ENCODE measurements at regions of chr11 and their contacts with region 1.

Region 1: GRCh38 chr11:64916775-64917662 is at the start of gene ATG2A:
- DNase-seq: peak; percentile 97 to 99 (median 99)
- H3K4me3 ChIP-seq: peak within 1 kb of the TSS; percentile 63 to 100 (median 93)
- H3K27ac ChIP-seq: peak within 1 kb of the TSS; percentile 49 to 96 (median 86)
- H3K27me3 ChIP-seq: no peaks in the 10 kb centered on the region
- CTCF ChIP-seq: peak in 25 of 56 donors; percentile 7 to 63 (median 26)
- total RNA-seq, gene ATG2A: 21.4 to 47.9 (median 34.8) TPM

Region 2: GRCh38 chr11:64834723-64835620 is 82.0 kb before region 1 on chr11:
- intact Hi-C with region 1: no loop called
- DNase-seq: no peak
- H3K4me3 ChIP-seq: no peak overlapping the region
- H3K27ac ChIP-seq: no peak overlapping the region
- H3K27me3 ChIP-seq: no peaks in the 10 kb centered on the region
- CTCF ChIP-seq: no peak

Region 3: GRCh38 chr11:64854534-64855429 is 62.2 kb before region 1 on chr11:
- intact Hi-C with region 1: no loop called
- DNase-seq: peak in 2 of 10 donors; percentile 70 to 79
- H3K4me3 ChIP-seq: no peak overlapping the region
- H3K27ac ChIP-seq: peak overlapping the region in 41 of 59 donors; percentile 2 to 92 (median 54)
- H3K27me3 ChIP-seq: no peaks in the 10 kb centered on the region
- CTCF ChIP-seq: no peak

Region 4: GRCh38 chr11:64878494-64879243 is 38.4 kb before region 1 on chr11 and contains the start of gene EHD1:
- intact Hi-C with region 1: loop called in 1 of 2 experiments (anchors 5 kb)
- DNase-seq: peak; percentile 96 to 99 (median 98)
- H3K4me3 ChIP-seq: peak within 1 kb of the TSS; percentile 63 to 99 (median 92)
- H3K27ac ChIP-seq: peak within 1 kb of the TSS; percentile 63 to 97 (median 92)
- H3K27me3 ChIP-seq: no peaks in the 10 kb centered on the region
- CTCF ChIP-seq: peak; percentile 36 to 92 (median 72)
- total RNA-seq, gene EHD1: 25.6 to 70.9 (median 43.6) TPM

Region 5: DNA sequence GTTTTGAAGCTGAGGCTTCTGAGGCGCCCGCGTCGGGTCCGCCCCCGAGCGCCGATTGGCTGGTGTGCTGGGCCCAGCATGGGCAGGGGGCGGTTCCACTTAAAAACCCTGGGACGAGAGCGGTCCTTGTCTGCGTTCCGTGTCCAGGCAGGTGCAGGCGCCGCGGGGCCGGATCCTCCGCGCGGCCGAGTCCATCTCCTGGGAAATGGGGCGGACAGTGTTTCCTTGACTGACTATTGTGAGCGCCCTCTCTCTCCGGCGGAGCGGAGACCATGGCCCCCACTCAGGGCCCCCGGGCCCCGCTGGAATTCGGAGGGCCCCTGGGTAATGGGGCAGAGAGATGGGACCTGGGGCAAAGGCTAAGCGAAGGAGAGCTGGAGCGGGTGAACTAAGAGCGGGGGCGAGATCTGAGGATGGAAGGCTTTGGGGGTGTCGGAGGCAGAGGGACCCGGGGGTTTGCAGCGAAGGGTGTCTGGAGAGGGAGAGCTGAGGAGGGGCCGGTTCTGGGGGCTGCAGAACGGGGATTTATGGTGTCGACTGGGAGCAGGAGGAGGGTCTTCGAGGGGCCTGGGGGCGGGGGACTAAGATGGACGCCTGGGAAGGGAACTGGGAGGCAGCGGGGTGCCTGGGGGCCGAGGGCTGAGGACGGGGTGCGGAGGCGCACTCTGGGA is 194.9 kb after region 1 on chr11 and contains the start of gene TM7SF2:
- intact Hi-C with region 1: loop called (anchors 5 kb)
- DNase-seq: peak; percentile 97 to 100 (median 99)
- H3K4me3 ChIP-seq: peak within 1 kb of the TSS; percentile 50 to 91 (median 73)
- H3K27ac ChIP-seq: peak within 1 kb of the TSS; percentile 37 to 92 (median 85)
- H3K27me3 ChIP-seq: no peaks in the 10 kb centered on the region
- CTCF ChIP-seq: peak in 19 of 56 donors; percentile 11 to 59 (median 31)
- total RNA-seq, gene TM7SF2: 26.8 to 66.8 (median 45.6) TPM

Measured in dorsolateral prefrontal cortex (tissue), 120 donors.